A549 (cell line): ENCODE measurements at regions of chr20 and their contacts with region 1.

Region 1: GRCh38 chr20:9978397-9979004 is 56.3 kb upstream of the ANKEF1 start:
- DNase-seq: peak; percentile 63 to 94
- ATAC-seq: peak; percentile 94 to 95
- H3K4me3 ChIP-seq: no peak overlapping the region; the same call in 2 of the 3 replicates
- H3K27ac ChIP-seq: peak overlapping the region; percentile 33 to 74
- H3K4me1 ChIP-seq: peaks cover 21% of the 10 kb centered on the region; the same call in 2 of the 3 replicates
- CTCF ChIP-seq: peak; percentile 100
- EP300 ChIP-seq: peak in 1 of 2 experiments; percentile 31; a peak in 1 of 5 replicates
- POLR2A ChIP-seq: no peak
- RAD21 ChIP-seq: peak; percentile 100

Region 2: DNA sequence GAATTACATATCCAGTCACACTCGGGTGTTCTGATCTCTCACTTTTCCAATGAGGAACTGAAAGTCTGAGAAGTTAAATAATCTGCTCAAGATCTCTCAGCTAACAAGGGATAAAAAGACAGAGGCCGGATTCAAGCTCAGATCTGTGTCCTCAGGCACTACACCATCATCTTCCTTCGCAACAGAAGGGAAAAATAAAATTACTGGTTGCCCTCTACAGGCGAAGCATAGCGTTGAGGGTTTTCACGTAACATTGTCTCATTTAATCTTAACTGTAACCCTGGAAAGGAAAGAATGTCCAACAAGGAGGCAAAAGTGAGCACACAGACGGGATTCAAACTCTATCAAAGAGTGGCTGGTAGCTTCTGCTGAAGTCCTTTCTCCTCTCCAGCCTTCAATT is 11.5 kb before region 1 on chr20:
- CTCF ChIA-PET with region 1: interaction called, 33 read pairs
- POLR2A ChIA-PET with region 1: no interaction called
- DNase-seq: peak; percentile 36 to 38
- ATAC-seq: peak; percentile 87 to 96
- H3K4me3 ChIP-seq: no peak overlapping the region
- H3K27ac ChIP-seq: no peak overlapping the region
- H3K4me1 ChIP-seq: no peaks in the 10 kb centered on the region
- CTCF ChIP-seq: peak; percentile 64
- EP300 ChIP-seq: no peak
- POLR2A ChIP-seq: no peak
- RAD21 ChIP-seq: peak; percentile 57 to 64; a peak in 4 of 5 replicates

Region 3: GRCh38 chr20:10090588-10091166 is 112.2 kb after region 1 on chr20:
- CTCF ChIA-PET with region 1: interaction called, 358 read pairs
- POLR2A ChIA-PET with region 1: interaction called, 9 read pairs
- DNase-seq: peak; percentile 57 to 76
- ATAC-seq: peak; percentile 84 to 91
- H3K4me3 ChIP-seq: no peak overlapping the region
- H3K27ac ChIP-seq: peak overlapping the region; percentile 70 to 85
- H3K4me1 ChIP-seq: peaks cover 43% of the 10 kb centered on the region
- CTCF ChIP-seq: peak; percentile 96
- EP300 ChIP-seq: no peak
- POLR2A ChIP-seq: no peak
- RAD21 ChIP-seq: peak; percentile 95 to 96

Region 4: GRCh38 chr20:10225439-10226060 is 247.0 kb after region 1 on chr20:
- CTCF ChIA-PET with region 1: interaction called, 18 read pairs
- POLR2A ChIA-PET with region 1: no interaction called
- DNase-seq: peak; percentile 33 to 66
- ATAC-seq: peak; percentile 49 to 77; a peak in 4 of 6 replicates
- H3K4me3 ChIP-seq: no peak overlapping the region
- H3K27ac ChIP-seq: peak overlapping the region; percentile 42 to 72
- H3K4me1 ChIP-seq: peaks cover 66% of the 10 kb centered on the region
- CTCF ChIP-seq: peak; percentile 43
- EP300 ChIP-seq: no peak
- POLR2A ChIP-seq: no peak
- RAD21 ChIP-seq: peak; percentile 49 to 58; a peak in 4 of 5 replicates

Region 5: GRCh38 chr20:10357974-10358373 is 379.5 kb after region 1 on chr20:
- CTCF ChIA-PET with region 1: interaction called, 24 read pairs
- POLR2A ChIA-PET with region 1: no interaction called
- DNase-seq: peak in 1 of 2 experiments; percentile 29
- ATAC-seq: no peak
- H3K4me3 ChIP-seq: no peak overlapping the region
- H3K27ac ChIP-seq: peak overlapping the region; percentile 92 to 93
- H3K4me1 ChIP-seq: peaks cover 36% of the 10 kb centered on the region
- CTCF ChIP-seq: peak; percentile 22; the same call in 1 of the 3 replicates
- EP300 ChIP-seq: no peak
- POLR2A ChIP-seq: no peak
- RAD21 ChIP-seq: peak; percentile 30 to 50; a peak in 2 of 5 replicates

Region 6: DNA sequence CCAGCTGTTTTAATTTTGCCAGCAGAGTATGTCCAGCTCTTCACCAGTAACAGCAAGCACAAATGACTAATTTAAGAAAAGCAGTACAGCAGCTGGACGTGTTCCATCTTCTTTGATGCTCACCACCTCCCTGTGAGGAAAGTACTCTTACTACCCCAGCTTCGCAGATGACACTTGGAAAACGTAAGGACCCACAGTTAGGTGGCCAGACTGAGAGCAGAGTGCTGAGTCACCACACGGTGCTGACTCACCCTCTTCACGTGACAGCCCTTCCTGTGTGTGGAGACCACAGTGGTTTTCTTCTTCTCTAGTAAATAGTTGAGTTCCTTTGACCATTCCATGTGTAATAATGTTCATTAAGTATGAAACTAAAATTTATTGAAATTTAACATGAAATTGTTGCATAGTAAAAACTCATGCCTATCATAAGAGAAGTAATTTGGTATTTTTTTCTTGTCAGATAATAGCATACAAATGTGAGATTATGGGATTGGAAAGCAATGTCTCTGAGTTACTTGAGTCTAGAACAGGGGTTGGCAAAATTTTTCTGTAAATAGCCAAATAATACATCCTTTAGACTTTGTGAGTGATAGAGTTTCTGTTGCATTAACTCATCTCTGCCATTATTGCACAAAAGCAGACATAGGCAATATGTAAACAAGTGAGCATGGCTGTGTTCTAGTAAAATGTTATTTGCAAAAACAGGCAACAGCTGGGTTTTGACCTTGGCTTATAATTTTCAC is 533.2 kb after region 1 on chr20:
- CTCF ChIA-PET with region 1: interaction called, 10 read pairs
- POLR2A ChIA-PET with region 1: interaction called, 3 read pairs
- DNase-seq: peak; percentile 94 to 95
- ATAC-seq: peak; percentile 95 to 97
- H3K4me3 ChIP-seq: no peak overlapping the region
- H3K27ac ChIP-seq: peak overlapping the region; percentile 88 to 89
- H3K4me1 ChIP-seq: peaks cover 66% of the 10 kb centered on the region
- CTCF ChIP-seq: no peak
- EP300 ChIP-seq: peak; percentile 33 to 54; a peak in 2 of 5 replicates
- POLR2A ChIP-seq: no peak
- RAD21 ChIP-seq: 0 out of 5 replicates have a peak, but pooled peaks of 1 of the 2 experiments have one; percentile 32

Region 7: DNA sequence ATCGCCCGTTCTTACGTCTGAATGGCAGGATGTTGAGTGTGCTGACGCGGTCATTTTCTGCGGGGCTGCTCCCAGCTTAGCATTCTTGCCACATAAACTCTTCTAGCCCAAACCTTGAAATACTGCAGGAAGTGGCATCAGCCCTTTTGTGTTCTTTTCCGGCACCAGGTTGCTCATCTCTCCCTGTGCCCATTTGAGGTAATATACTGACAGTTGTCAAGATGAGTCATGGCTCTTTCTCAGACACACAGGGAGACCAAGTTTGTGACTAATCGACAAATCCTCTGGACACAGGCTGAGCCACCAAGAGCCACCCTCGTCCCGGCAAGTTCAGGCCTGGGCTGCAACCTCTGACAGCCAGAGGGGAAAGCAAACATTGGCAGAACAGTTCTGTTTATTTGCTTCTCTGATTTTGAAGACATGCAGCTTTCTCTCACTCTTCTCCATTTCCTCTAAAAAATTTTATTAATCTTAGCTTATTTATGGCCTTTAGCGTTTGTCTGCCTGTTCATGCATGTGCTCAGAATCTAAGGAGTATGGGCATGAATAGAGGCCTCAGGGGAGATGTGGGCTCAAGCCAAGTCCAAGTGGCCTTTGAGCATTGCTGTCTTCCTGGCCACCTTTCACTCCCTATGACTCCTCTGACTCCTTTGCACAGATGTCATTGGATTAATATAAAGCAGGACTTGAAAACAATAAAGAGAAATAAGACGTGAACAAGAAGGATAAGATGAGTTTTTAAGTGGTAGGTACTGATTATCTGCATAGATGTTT is 1023.5 kb after region 1 on chr20:
- CTCF ChIA-PET with region 1: no interaction called
- POLR2A ChIA-PET with region 1: no interaction called
- DNase-seq: peak; percentile 91 to 98
- ATAC-seq: peak; percentile 97 to 98
- H3K4me3 ChIP-seq: no peak overlapping the region
- H3K27ac ChIP-seq: peak overlapping the region; percentile 84 to 85
- H3K4me1 ChIP-seq: peaks cover 29% of the 10 kb centered on the region
- CTCF ChIP-seq: no peak
- EP300 ChIP-seq: peak; percentile 93; a peak in 4 of 5 replicates
- POLR2A ChIP-seq: no peak
- RAD21 ChIP-seq: peak; percentile 53 to 73; a peak in 4 of 5 replicates

Region 8: DNA sequence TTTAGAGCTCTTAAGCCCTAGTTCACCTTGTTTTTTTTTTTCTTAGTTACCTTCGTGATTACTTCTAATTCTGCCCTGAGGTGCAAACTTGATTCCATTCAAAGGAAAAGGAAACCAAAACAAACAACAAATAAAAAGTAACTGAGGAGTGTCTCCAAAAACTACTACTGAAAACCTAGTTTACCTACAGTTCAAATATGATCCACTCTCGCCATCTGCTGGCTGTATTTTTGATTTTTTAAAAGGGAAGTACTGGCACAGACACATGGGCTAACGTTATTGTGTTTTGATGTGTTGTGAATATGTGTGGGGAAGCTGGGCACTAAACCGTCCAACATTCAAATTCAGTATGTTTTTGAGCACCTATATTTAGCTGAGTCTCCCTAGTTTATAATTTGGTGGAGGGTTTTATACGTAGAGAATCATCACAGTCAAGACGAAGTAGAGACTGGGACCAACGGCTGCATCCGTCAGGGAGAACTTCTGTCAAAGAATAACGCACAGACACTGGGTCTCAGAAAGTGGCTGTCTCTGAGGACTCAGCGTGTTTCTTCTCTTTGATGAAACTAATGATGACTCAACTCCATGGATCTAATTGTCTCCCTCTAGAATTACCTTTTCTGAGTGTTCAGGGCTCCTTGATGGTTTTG is 1565.7 kb after region 1 on chr20:
- CTCF ChIA-PET with region 1: interaction called, 19 read pairs
- POLR2A ChIA-PET with region 1: no interaction called
- DNase-seq: peak; percentile 55 to 84
- ATAC-seq: peak; percentile 85 to 93
- H3K4me3 ChIP-seq: no peak overlapping the region
- H3K27ac ChIP-seq: peak overlapping the region; percentile 75 to 83
- H3K4me1 ChIP-seq: peaks cover 22% of the 10 kb centered on the region
- CTCF ChIP-seq: peak; percentile 95
- EP300 ChIP-seq: no peak
- POLR2A ChIP-seq: no peak
- RAD21 ChIP-seq: peak; percentile 98